ENCODE measurements at regions of chr15 and their contacts with region 1.

Region 1: DNA sequence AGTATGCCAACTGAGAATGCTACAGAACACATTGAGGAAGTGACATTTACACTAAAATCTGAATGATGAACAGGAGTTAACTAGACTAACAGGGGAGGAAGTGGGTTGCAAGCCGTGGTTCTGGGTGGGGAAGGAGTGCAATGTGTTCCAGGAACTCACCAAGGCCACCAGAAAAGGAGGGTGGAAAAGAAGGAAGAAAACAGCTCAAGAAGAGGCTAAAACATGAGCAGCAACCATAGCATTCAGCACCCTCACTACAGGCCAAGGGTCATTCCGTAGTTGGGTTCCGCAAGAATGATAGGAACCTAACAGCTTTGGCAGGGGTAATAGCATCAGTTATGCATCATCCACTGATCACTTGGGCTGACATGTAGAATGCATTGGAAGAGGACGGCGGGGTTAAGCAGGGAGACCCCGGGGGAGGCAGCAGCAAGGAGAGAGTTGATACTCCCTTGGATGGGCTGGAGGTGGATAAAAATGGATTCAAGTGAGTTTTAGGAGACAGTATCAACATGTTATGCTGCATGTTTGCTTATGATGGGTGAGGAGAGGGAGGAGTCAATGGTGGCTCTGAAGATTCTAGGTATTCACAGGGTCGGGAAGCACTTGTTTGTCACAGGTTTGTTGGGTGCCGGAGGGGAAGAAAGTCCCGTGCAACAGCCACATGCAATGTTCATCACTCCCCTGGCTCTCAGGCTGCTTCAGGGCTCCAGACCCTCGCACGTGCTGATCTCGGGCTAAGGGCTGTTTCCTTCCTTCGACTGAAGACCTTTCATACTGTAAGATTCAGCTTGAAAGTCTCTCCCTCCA is 53.2 kb downstream of the LIPC start:
- DNase-seq: peak in 1 of 5 donors; percentile 49
- ATAC-seq: peak in 2 of 4 donors; percentile 51 to 53
- H3K4me3 ChIP-seq: no peak overlapping the region
- H3K27ac ChIP-seq: peak overlapping the region in 1 of 12 donors; percentile 81
- H3K4me1 ChIP-seq: peaks cover 0 to 38% (median 0%) of the 10 kb centered on the region in 12 donors
- H3K27me3 ChIP-seq: no peaks in the 10 kb centered on the region
- CTCF ChIP-seq: no peak
- POLR2A ChIP-seq: no peak

Region 2: GRCh38 chr15:58447271-58448010 is 37.6 kb before region 1 on chr15:
- intact Hi-C with region 1: loop called in 1 of 10 experiments (anchors 2 kb)
- DNase-seq: no peak
- ATAC-seq: peak in 1 of 4 donors; percentile 28
- H3K4me3 ChIP-seq: no peak overlapping the region
- H3K27ac ChIP-seq: peak overlapping the region in 3 of 12 donors; percentile 0 to 14 (median 13)
- H3K4me1 ChIP-seq: peaks cover 0 to 23% (median 6%) of the 10 kb centered on the region in 12 donors
- H3K27me3 ChIP-seq: no peaks in the 10 kb centered on the region
- CTCF ChIP-seq: no peak
- POLR2A ChIP-seq: no peak

Region 3: GRCh38 chr15:58510715-58511598 is 26.0 kb after region 1 on chr15:
- intact Hi-C with region 1: no loop called
- DNase-seq: no peak
- ATAC-seq: no peak
- H3K4me3 ChIP-seq: no peak overlapping the region
- H3K27ac ChIP-seq: no peak overlapping the region
- H3K4me1 ChIP-seq: peaks cover 0 to 23% (median 4%) of the 10 kb centered on the region in 12 donors
- H3K27me3 ChIP-seq: no peaks in the 10 kb centered on the region
- CTCF ChIP-seq: no peak
- POLR2A ChIP-seq: no peak

Region 4: GRCh38 chr15:58568157-58568571 is 83.2 kb after region 1 on chr15:
- intact Hi-C with region 1: loop called in 1 of 10 experiments (anchors 10 kb)
- DNase-seq: peak in 3 of 5 donors; percentile 38 to 60 (median 56)
- ATAC-seq: peak in 2 of 4 donors; percentile 46 to 48
- H3K4me3 ChIP-seq: no peak overlapping the region
- H3K27ac ChIP-seq: peak overlapping the region in 3 of 12 donors; percentile 13 to 62 (median 38)
- H3K4me1 ChIP-seq: peaks cover 0 to 16% (median 0%) of the 10 kb centered on the region in 12 donors
- H3K27me3 ChIP-seq: no peaks in the 10 kb centered on the region
- CTCF ChIP-seq: no peak
- POLR2A ChIP-seq: no peak

Region 5: DNA sequence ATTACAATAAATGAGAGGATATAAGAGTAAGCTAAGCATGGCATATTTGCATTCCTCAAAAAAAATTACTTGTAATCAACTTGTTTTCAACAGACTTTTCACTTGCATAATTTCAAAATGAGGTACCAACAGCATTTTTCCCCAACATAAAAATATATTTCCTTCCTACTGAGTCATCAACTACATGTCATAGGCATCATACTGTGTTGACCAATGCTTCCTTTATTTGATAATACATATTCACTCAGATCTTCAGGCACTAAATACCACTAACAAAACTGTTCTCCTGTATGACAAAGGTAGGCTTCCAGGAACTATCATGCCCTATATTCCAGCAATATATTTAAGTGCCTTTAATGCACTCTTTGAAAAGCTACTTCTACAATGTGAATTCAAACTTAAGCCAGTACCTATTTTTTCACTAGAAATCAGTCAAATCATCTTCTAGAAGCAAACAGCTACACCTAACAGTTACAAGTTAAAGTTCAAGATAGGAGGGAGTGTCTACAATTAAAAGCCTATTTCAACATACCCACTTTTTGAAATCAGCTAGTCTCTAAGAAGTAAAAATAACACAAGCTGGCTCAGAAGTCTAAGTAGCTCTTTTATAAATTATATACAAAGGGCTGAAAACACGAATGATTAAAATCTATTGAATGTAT is 253.2 kb after region 1 on chr15:
- intact Hi-C with region 1: no loop called
- DNase-seq: no peak
- ATAC-seq: peak in 1 of 4 donors; percentile 29
- H3K4me3 ChIP-seq: no peak overlapping the region
- H3K27ac ChIP-seq: peak overlapping the region in 1 of 12 donors; percentile 75
- H3K4me1 ChIP-seq: peaks cover 3 to 97% (median 62%) of the 10 kb centered on the region in 12 donors
- H3K27me3 ChIP-seq: no peaks in the 10 kb centered on the region
- CTCF ChIP-seq: no peak
- POLR2A ChIP-seq: no peak